ENCODE measurements at regions of chr6 and their contacts with region 1.

Region 1: DNA sequence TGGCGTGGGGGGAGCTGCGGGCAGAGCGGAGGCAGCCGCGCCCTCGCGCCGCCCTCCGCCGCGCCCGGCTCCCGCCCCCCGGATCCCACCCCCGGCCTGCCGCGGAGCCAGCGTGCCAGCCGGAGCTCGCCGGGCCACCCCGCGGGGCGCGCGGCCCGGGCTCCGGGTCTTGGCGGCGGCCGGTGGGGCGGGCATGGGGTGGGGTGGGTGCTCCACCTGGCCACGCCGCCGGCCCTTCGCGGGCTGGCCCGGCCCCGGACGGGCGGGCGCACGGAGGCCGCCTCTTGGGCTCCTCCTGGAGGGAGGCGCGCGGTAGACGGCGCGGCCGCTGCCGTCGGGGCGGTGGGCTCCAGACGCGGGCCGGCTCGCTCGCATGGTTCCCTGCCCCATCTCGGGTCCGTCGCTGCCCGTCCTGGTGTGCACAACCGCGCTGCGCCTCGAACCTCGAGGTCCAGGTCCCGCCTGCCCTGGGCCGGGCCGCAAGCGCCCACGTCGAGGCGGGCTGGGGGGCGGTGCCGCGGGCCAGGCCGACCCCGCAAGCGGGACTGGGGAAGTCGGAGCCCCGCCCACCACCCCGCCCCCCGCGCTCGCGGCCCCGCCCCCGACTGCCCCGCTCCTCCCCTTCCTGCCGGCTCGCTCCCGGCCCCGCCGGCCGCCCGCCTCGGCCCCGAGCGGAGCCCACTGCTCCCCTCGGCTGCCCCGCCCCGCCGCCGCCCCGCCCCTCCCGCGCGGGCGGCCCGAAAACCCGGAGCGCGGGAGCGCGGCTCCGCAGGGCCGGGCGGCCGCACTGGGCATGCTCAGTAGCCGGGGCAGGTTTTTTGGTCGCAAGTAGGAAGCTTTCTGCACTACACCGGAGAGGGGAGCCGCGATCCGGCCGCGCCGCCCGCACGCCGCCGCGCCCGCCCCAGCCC is at the start of gene CDYL:
- DNase-seq: peak; percentile 88
- ATAC-seq: peak; percentile 91 to 94
- total RNA-seq, gene CDYL: 26.9 to 31.2 TPM

Region 2: GRCh38 chr6:4125936-4126864 is 649.6 kb before region 1 on chr6:
- intact Hi-C with region 1: no loop called
- DNase-seq: no peak
- ATAC-seq: peak; percentile 38 to 91

Region 3: GRCh38 chr6:4647414-4648365 is 128.1 kb before region 1 on chr6:
- intact Hi-C with region 1: loop called in 1 of 2 experiments (anchors 5 kb)
- DNase-seq: peak; percentile 84
- ATAC-seq: peak; percentile 97 to 98

Region 4: GRCh38 chr6:4743062-4743461 is 32.8 kb before region 1 on chr6:
- intact Hi-C with region 1: no loop called
- DNase-seq: no peak
- ATAC-seq: no peak

Region 5: DNA sequence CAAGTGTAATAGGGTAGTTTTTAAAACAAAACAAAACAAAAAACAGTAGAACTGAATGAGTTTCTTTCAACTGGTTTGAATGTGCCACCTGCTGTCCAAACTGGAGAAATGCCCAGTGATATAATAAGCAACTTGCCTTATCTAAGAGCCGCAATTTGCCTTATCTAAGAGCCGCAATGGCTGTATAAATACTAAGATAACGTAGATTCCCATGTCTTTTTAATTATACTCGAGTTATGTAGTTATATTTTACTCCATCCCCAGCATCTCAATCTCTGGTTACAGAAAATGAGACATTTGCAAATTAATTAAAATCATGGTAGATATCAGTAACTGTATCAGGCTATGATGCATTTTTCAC is 160.8 kb after region 1 on chr6:
- intact Hi-C with region 1: loop called in 1 of 2 experiments (anchors 10 kb)
- DNase-seq: no peak
- ATAC-seq: no peak